Activated CD4-positive, alpha-beta T cell treated with anti-CD3 and anti-CD28 coated beads, Interleukin-2, amount 10 ng/mL, durations not matched to agents 24 days and 14 days (primary cell): ENCODE measurements at regions of chr5 and their contacts with region 1.

Region 1: GRCh38 chr5:115841382-115842088 is at the starts of genes AP3S1 and ATG12:
- DNase-seq: peak; percentile 98
- H3K4me3 Mint-ChIP-seq: peak within 1 kb of the TSS; percentile 98
- H3K27ac Mint-ChIP-seq: peak within 1 kb of the TSS; percentile 100
- H3K4me1 Mint-ChIP-seq: peaks cover 53% of the 10 kb centered on the region
- H3K27me3 Mint-ChIP-seq: peaks cover 9% of the 10 kb centered on the region
- total RNA-seq, gene AP3S1: 64.6 and 72.8 TPM in 2 replicates
- total RNA-seq, gene ATG12: 31.7 and 37.0 TPM in 2 replicates

Region 2: DNA sequence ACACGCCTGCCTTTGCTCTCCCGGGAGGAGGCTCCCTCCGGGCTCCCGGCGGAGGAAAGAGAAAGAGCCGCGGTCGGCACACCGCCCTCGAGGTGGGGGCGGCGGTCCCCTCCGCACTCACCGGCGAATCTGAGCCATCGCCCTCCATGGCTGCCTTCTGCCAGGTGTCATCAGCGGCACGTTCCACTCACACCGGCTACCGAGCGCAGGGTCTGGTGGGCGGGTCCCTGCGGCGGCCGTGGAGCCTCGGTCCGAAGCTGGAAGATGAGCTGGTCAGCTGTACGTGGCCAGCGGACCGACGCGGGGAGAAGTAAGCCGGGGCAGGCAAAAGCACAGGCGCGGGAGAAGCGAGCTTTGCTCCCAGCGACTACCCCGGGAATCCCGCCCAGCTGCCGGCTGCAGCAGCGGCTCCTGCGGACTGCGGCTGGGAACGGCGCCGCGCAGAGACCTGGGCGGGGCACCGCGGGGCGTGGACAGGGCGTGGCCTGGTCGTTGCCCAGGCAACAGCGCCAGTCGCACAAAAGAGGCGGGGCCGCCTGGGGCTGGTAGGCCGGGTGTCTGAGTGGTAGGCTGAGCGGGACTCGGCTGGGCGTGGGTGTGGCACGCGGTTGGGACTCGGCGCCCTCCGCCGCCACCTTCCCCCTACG is 671.9 kb before region 1 on chr5 and contains the start of gene TRIM36:
- intact Hi-C with region 1: loop called (anchors 10 kb)
- DNase-seq: peak; percentile 98
- H3K4me3 Mint-ChIP-seq: peak within 1 kb of the TSS; percentile 86
- H3K27ac Mint-ChIP-seq: peak within 1 kb of the TSS; percentile 75
- H3K4me1 Mint-ChIP-seq: peaks cover 14% of the 10 kb centered on the region
- H3K27me3 Mint-ChIP-seq: peaks cover 63% of the 10 kb centered on the region
- total RNA-seq, gene TRIM36: 0.12 TPM in 1 of 2 replicates, not detected in the other

Region 3: GRCh38 chr5:115296124-115297022 is 545.2 kb before region 1 on chr5 and contains the start of gene CCDC112:
- intact Hi-C with region 1: loop called (anchors 5 kb)
- DNase-seq: peak; percentile 87
- H3K4me3 Mint-ChIP-seq: peak within 1 kb of the TSS; percentile 85
- H3K27ac Mint-ChIP-seq: no peak within 1 kb of the TSS
- H3K4me1 Mint-ChIP-seq: peaks cover 4% of the 10 kb centered on the region
- H3K27me3 Mint-ChIP-seq: peaks cover 59% of the 10 kb centered on the region
- total RNA-seq, gene CCDC112: 0.31 and 0.49 TPM in 2 replicates

Region 4: GRCh38 chr5:115544436-115545350 is 296.8 kb before region 1 on chr5 and contains the start of gene FEM1C:
- intact Hi-C with region 1: loop called (anchors 1 kb)
- DNase-seq: peak; percentile 97
- H3K4me3 Mint-ChIP-seq: peak within 1 kb of the TSS; percentile 99
- H3K27ac Mint-ChIP-seq: peak within 1 kb of the TSS; percentile 100
- H3K4me1 Mint-ChIP-seq: peaks cover 38% of the 10 kb centered on the region
- H3K27me3 Mint-ChIP-seq: no peaks in the 10 kb centered on the region
- total RNA-seq, gene FEM1C: 13.9 and 14.6 TPM in 2 replicates

Region 5: GRCh38 chr5:115625579-115626444 is 215.7 kb before region 1 on chr5 and contains the start of gene TMED7:
- intact Hi-C with region 1: loop called (anchors 1 kb)
- DNase-seq: peak; percentile 100
- H3K4me3 Mint-ChIP-seq: no peak within 1 kb of the TSS
- H3K27ac Mint-ChIP-seq: peak within 1 kb of the TSS; percentile 88
- H3K4me1 Mint-ChIP-seq: peaks cover 19% of the 10 kb centered on the region
- H3K27me3 Mint-ChIP-seq: peaks cover 10% of the 10 kb centered on the region
- total RNA-seq, gene TMED7: 40.9 and 41.9 TPM in 2 replicates

Region 6: DNA sequence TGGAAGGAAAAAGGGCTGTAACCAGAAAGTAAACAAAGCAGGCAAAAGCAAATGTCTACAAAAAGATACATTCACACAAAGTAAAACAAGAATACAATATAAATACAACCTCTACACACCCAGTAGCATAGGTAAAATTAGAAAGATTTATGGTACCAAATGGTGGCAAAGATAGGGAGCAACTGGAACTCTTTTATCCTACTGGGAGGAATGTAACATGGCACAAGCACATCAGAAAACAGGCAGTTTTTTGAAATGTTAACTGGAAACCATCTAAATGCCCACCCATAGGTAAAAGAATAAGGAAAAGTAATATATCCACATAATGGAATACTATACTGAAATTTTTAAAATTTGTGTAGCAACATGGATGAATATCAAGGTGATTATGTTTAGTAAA is 182.1 kb after region 1 on chr5:
- intact Hi-C with region 1: no loop called
- DNase-seq: no peak
- H3K4me3 Mint-ChIP-seq: no peak overlapping the region
- H3K27ac Mint-ChIP-seq: no peak overlapping the region
- H3K4me1 Mint-ChIP-seq: no peaks in the 10 kb centered on the region
- H3K27me3 Mint-ChIP-seq: peaks cover 8% of the 10 kb centered on the region

Region 7: DNA sequence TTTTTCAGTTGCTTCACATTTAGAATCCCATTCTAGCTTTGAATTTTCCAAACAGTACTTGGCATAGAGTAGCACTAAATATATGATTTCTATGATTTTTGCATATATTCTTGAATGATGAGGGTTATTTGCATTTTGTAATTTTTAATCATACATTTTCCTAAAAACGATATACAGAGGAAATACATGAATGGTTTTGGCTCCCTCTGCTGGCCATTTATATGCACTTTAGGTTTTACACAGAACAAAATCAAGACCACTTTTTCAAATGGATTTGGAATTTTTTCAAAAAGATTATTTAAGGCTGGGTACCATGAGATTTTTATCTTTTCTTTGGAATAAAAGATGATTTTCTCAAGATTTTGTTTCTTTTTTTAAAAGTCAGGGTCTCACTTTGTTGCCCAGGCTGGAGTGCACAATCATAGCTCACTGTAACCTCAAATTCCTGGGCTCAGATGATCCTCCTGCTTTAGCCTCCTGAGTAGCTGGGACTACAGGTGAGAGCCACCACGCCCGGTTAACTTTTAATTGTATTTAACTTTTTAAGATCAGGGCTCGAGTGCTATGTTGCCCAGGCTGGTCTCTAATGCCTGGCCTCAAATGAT is 226.6 kb after region 1 on chr5:
- intact Hi-C with region 1: loop called (anchors 2 kb)
- DNase-seq: peak; percentile 76
- H3K4me3 Mint-ChIP-seq: no peak overlapping the region
- H3K27ac Mint-ChIP-seq: no peak overlapping the region
- H3K4me1 Mint-ChIP-seq: no peaks in the 10 kb centered on the region
- H3K27me3 Mint-ChIP-seq: peaks cover 40% of the 10 kb centered on the region